ENCODE measurements at regions of chr2 and their contacts with region 1.

Region 1: GRCh38 chr2:225650041-225650440 is 250.5 kb downstream of the NYAP2 start:
- DNase-seq: no peak
- H3K4me3 ChIP-seq: no peak overlapping the region
- H3K27ac ChIP-seq: no peak overlapping the region
- H3K4me1 ChIP-seq: no peaks in the 10 kb centered on the region
- H3K27me3 ChIP-seq: no peaks in the 10 kb centered on the region
- CTCF ChIP-seq: no peak

Region 2: GRCh38 chr2:225282858-225283710 is 367.0 kb before region 1 on chr2:
- intact Hi-C with region 1: loop called (anchors 10 kb)
- DNase-seq: peak in 1 of 5 donors; percentile 13
- H3K4me3 ChIP-seq: no peak overlapping the region
- H3K27ac ChIP-seq: no peak overlapping the region
- H3K4me1 ChIP-seq: no peaks in the 10 kb centered on the region
- H3K27me3 ChIP-seq: no peaks in the 10 kb centered on the region
- CTCF ChIP-seq: peak; percentile 57